Gastrocnemius medialis (tissue), 4 donors: ENCODE measurements at regions of chr6 and their contacts with region 1.

Region 1: DNA sequence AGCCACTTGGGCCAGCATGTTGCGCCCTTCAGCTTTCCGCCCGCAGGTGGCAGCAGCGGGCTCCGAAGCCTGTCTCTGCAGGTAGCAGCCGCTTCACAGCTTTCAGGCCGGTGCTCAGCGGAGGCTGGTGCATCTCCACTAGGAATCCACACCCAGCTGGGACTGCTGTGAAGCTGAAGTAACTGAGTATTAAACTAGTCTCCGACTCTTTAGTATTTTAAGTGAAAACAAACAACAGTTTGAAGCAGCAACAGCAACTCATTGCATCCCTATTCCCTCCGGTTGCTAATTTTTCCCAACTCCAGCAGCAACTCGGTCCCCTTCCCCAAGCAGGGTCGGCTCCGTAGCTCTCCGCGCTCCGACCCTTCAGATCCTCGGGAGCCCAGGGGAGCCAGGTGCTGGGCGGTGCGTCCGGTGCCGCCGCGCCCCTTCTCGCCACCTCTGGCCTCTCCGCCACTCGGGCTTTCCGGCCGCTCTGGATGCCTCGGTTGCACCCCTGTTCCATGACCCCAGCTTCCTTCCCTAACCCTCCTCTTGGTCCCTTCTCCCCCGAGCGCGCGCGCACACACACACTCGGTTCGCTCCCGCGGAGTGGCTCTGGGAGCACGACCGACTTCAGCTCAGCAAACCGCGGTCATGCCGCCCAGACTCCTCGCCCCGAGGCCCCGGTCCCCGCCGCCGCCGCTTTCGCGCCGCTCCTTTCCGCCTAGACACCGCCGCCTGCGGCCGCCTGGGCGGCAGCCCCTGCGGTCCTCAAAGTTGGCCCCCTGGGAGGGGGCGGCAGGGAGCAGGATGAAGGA is 768 bp upstream of the NKAIN2 start:
- DNase-seq: peak; percentile 64 to 73
- ATAC-seq: peak; percentile 86 to 90
- H3K4me3 ChIP-seq: peak overlapping the region; percentile 64 to 85 (median 72)
- H3K27ac ChIP-seq: peak overlapping the region; percentile 44 to 75 (median 60)
- H3K4me1 ChIP-seq: peaks cover 0 to 25% of the 10 kb centered on the region in 2 donors
- H3K27me3 ChIP-seq: no peaks in the 10 kb centered on the region
- CTCF ChIP-seq: peak; percentile 70 to 94 (median 84)
- POLR2A ChIP-seq: no peak

Region 2: DNA sequence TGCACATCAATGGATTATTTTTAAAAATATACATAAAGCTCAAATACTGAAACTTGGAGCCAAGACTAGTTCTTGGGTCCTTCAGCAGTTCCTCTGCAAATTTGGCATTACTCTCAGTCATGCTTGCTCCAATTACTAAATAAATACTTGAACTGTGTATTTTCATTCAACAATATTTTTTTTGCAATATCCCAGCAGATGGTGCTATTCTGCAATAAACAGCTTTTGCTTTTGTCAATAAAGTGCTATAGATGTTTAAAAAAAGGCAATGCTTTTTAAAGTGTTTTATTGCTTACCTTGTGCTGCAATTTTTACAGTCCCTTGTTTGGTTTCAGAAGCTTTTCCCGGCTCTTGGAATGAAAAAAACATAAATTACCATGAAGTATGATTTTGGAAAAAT is 409.6 kb before region 1 on chr6:
- in situ Hi-C with region 1: no loop called
- intact Hi-C with region 1: loop called (anchors 10 kb)
- DNase-seq: no peak
- ATAC-seq: no peak
- H3K4me3 ChIP-seq: no peak overlapping the region
- H3K27ac ChIP-seq: peak overlapping the region in 3 of 4 donors; percentile 3 to 41 (median 19)
- H3K4me1 ChIP-seq: peaks cover 4 to 7% of the 10 kb centered on the region in 2 donors
- H3K27me3 ChIP-seq: no peaks in the 10 kb centered on the region
- CTCF ChIP-seq: peak in 4 of 5 experiments; percentile 10 to 36 (median 22)
- POLR2A ChIP-seq: no peak

Region 3: DNA sequence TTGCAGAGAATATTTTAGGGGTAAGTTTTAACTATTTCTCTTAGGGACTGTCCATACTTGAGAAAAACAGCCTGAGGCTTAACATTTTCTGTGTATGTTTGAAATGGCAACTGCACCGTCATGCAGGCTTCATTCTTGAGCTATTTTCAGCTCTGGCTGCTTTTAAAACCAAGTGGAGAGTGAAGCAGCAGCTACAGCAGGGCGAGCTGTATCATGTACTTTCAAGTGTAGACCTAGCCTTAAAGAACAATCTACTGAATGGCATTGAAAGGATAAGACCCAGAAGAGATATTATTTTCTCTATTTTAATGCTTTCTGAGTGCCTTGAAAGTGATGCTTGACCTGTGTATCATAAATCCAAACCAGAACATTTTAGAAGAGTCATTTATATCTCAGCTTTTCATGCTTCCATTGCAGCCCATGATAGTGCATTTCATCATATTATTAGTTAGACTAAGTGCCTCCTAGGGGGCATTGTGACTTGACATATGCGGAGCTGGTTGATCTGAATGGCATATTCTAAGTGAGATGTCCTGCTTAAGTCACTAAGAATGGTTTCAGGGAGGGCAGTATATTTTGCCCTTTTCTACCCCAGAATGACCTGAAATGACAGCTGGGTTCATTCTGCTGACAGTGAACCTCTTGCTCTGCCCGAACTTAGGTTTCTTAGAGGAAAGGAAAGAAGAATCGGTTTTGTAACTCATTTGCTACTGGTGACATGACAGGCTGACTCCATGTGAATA is 86.0 kb after region 1 on chr6:
- in situ Hi-C with region 1: no loop called
- intact Hi-C with region 1: loop called (anchors 2 kb)
- DNase-seq: peak in 1 of 2 donors; percentile 36
- ATAC-seq: peak; percentile 86 to 93
- H3K4me3 ChIP-seq: peak overlapping the region in 3 of 4 donors; percentile 2 to 22 (median 11)
- H3K27ac ChIP-seq: peak overlapping the region; percentile 67 to 80 (median 70)
- H3K4me1 ChIP-seq: peaks cover 17 to 27% of the 10 kb centered on the region in 2 donors
- H3K27me3 ChIP-seq: no peaks in the 10 kb centered on the region
- CTCF ChIP-seq: no peak
- POLR2A ChIP-seq: no peak

Region 4: GRCh38 chr6:123965894-123966293 is 163.0 kb after region 1 on chr6:
- in situ Hi-C with region 1: no loop called
- intact Hi-C with region 1: loop called (anchors 1 kb)
- DNase-seq: no peak
- ATAC-seq: peak in 1 of 2 donors; percentile 71
- H3K4me3 ChIP-seq: no peak overlapping the region
- H3K27ac ChIP-seq: no peak overlapping the region
- H3K4me1 ChIP-seq: peaks cover 8 to 10% of the 10 kb centered on the region in 2 donors
- H3K27me3 ChIP-seq: no peaks in the 10 kb centered on the region
- CTCF ChIP-seq: peak in 2 of 5 experiments; percentile 21 to 25
- POLR2A ChIP-seq: no peak

Region 5: DNA sequence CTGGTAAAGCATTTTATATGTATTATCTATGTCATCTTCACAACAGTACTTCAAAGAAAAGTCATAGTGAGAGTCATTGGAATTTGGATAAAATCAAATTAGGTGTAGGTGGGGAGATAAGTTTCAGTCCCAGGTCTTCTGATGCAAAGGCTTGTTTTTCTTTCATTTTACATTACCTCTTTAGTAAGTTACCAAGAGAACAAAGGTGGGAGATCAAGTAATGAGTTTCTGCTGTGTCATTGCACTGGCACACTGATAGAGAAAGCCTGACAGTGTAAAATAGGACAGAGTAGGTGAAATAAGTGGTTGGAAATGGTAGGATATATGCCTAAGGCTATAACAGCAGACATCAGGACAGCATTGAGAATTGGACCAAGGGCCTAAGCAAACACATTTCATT is 251.1 kb after region 1 on chr6:
- in situ Hi-C with region 1: no loop called
- intact Hi-C with region 1: loop called (anchors 10 kb)
- DNase-seq: no peak
- ATAC-seq: peak in 1 of 2 donors; percentile 51
- H3K4me3 ChIP-seq: no peak overlapping the region
- H3K27ac ChIP-seq: no peak overlapping the region
- H3K4me1 ChIP-seq: peaks cover 4 to 17% of the 10 kb centered on the region in 2 donors
- H3K27me3 ChIP-seq: no peaks in the 10 kb centered on the region
- CTCF ChIP-seq: no peak
- POLR2A ChIP-seq: no peak

Region 6: DNA sequence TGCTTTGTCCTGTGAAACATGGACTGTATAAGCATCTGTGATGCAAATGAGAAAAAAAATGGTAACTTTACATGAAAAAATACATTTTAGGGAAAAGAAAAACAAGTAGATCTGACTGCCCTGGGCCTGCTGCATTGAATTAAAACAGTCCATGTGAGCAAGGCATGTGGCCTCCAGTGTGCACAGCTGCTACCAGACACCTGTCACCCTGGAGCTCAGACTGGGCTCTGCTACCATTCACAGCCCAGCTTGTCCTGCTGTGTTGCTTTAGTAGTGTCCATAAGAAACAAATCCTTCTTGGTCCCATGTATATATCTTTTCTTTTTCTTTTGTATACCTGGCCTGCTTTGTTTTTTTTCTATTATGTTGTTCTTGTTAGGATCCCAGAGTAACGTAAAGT is 316.7 kb after region 1 on chr6:
- in situ Hi-C with region 1: loop called in 1 of 4 experiments (anchors 25 kb)
- intact Hi-C with region 1: no loop called
- DNase-seq: peak; percentile 53 to 54
- ATAC-seq: peak; percentile 93 to 94
- H3K4me3 ChIP-seq: no peak overlapping the region
- H3K27ac ChIP-seq: peak overlapping the region in 3 of 4 donors; percentile 39 to 55 (median 47)
- H3K4me1 ChIP-seq: peaks cover 8 to 28% of the 10 kb centered on the region in 2 donors
- H3K27me3 ChIP-seq: no peaks in the 10 kb centered on the region
- CTCF ChIP-seq: no peak
- POLR2A ChIP-seq: no peak